PC-9 (cell line): ENCODE measurements at regions of chr13 and their contacts with region 1.

Region 1: GRCh38 chr13:46126552-46127357 is 21.9 kb upstream of the CPB2 start:
- DNase-seq: peak; percentile 41 to 64
- H3K4me3 ChIP-seq: no peak overlapping the region
- H3K27ac ChIP-seq: no peak overlapping the region
- H3K4me1 ChIP-seq: no peaks in the 10 kb centered on the region
- H3K27me3 ChIP-seq: no peaks in the 10 kb centered on the region
- CTCF ChIP-seq: peak; percentile 82

Region 2: DNA sequence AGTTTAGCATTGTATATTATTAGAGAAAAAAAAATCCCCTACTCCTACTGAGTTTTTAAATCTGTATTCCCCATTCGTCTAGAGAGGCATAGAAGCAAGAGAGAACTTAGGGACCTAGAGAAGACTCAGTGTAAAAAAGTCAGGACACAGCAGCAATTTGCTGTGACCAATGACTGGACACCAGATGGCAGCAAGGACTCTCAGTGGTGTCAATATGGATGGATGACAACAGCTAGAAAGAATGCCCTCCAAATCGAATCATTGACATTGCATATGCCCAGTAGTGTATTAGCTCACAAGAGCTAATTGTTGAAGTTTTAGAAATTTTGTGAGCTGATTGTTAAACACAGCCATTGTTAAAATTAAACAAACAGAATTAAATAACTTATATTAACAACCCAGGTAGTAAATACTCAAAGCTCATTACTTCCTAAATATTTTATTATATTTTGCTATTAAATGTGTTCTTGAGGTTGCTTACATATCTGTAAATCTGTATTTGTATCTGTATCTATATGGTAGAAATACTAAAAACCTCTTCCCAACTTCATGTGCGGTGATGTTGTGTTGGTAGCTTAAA is 319.1 kb before region 1 on chr13:
- CTCF ChIA-PET with region 1: interaction called, 6 read pairs
- POLR2A ChIA-PET with region 1: no interaction called
- intact Hi-C with region 1: loop called (anchors 1 kb)
- DNase-seq: peak; percentile 24 to 56
- H3K4me3 ChIP-seq: no peak overlapping the region
- H3K27ac ChIP-seq: no peak overlapping the region
- H3K4me1 ChIP-seq: no peaks in the 10 kb centered on the region
- H3K27me3 ChIP-seq: peaks cover 7% of the 10 kb centered on the region; the same call in 1 of the 2 replicates
- CTCF ChIP-seq: peak; percentile 74

Region 3: DNA sequence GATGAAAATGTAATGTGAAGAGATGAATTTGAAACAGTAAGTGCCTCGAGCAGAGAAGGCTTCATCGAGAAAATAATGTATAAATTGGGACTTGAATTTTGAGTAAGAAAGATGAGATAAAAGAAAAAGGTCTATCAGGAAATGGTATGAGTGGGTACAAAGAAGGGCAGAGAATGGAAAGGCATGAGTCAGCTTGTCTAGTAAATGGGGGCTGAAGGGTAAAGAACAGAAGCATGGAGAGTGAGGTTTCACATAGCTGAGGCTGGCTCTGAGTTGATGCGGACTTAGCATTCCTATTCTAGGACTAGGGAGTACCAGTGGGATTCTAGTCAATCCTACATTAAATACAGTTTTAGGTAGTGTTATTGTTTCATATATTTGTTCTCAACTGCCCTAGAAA is 160.0 kb before region 1 on chr13:
- CTCF ChIA-PET with region 1: no interaction called
- POLR2A ChIA-PET with region 1: no interaction called
- intact Hi-C with region 1: loop called (anchors 10 kb)
- DNase-seq: no peak
- H3K4me3 ChIP-seq: no peak overlapping the region
- H3K27ac ChIP-seq: no peak overlapping the region
- H3K4me1 ChIP-seq: no peaks in the 10 kb centered on the region
- H3K27me3 ChIP-seq: no peaks in the 10 kb centered on the region
- CTCF ChIP-seq: no peak

Region 4: DNA sequence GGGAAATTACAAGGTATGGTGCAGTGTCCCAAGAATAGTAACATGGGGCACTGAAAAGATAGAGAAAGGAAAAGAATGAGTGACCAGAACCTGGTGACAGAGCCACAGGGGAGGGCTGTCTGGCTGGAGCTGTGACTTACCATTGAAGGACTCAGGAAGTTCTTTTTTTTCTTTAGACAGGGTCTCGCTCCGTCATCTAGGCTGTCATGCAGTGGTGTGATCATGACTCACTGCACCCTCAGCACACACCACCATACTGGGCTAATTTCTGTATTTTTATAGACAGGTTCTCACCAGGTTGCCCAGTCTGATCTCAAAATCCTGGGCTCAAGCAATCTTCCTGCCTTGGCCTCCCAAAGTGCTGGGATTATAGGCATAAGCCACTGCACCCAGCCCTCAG is 13.2 kb before region 1 on chr13:
- CTCF ChIA-PET with region 1: no interaction called
- POLR2A ChIA-PET with region 1: interaction called, 10 read pairs
- intact Hi-C with region 1: no loop called
- DNase-seq: peak in 1 of 2 experiments; percentile 11
- H3K4me3 ChIP-seq: no peak overlapping the region
- H3K27ac ChIP-seq: no peak overlapping the region
- H3K4me1 ChIP-seq: no peaks in the 10 kb centered on the region
- H3K27me3 ChIP-seq: no peaks in the 10 kb centered on the region
- CTCF ChIP-seq: no peak